Endothelial cell of umbilical vein (primary cell): ENCODE measurements at regions of chr1 and their contacts with region 1.

Region 1: GRCh38 chr1:109099938-109100773 is 9.6 kb downstream of the TMEM167B start:
- DNase-seq: peak; percentile 95
- H3K4me3 ChIP-seq: peak overlapping the region; percentile 62 to 97 (median 90)
- H3K27ac ChIP-seq: peak overlapping the region; percentile 76
- H3K4me1 ChIP-seq: no peaks in the 10 kb centered on the region
- H3K27me3 ChIP-seq: no peaks in the 10 kb centered on the region
- CTCF ChIP-seq: peak; percentile 90 to 94
- POLR2A ChIP-seq: peak; percentile 99

Region 2: GRCh38 chr1:109075531-109076490 is 24.3 kb before region 1 on chr1 and contains the start of gene TAF13:
- CTCF ChIA-PET with region 1: interaction called, 26 read pairs
- POLR2A ChIA-PET with region 1: interaction called, 11 read pairs
- dilution Hi-C with region 1: no loop called
- intact Hi-C with region 1: loop called (anchors 1 kb)
- DNase-seq: peak; percentile 96
- H3K4me3 ChIP-seq: peak within 1 kb of the TSS; percentile 53 to 90 (median 67)
- H3K27ac ChIP-seq: peak within 1 kb of the TSS; percentile 93
- H3K4me1 ChIP-seq: peaks cover 21% of the 10 kb centered on the region
- H3K27me3 ChIP-seq: no peaks in the 10 kb centered on the region
- CTCF ChIP-seq: peak in 1 of 2 donors; percentile 4
- POLR2A ChIP-seq: peak; percentile 97
- total RNA-seq, gene TAF13: 42.3 and 54.9 TPM in 2 replicates

Region 3: GRCh38 chr1:109083923-109084322 is 16.2 kb before region 1 on chr1:
- CTCF ChIA-PET with region 1: interaction called, 14 read pairs
- POLR2A ChIA-PET with region 1: interaction called, 3 read pairs
- dilution Hi-C with region 1: no loop called
- intact Hi-C with region 1: no loop called
- DNase-seq: no peak
- H3K4me3 ChIP-seq: no peak overlapping the region
- H3K27ac ChIP-seq: no peak overlapping the region
- H3K4me1 ChIP-seq: peaks cover 9% of the 10 kb centered on the region
- H3K27me3 ChIP-seq: no peaks in the 10 kb centered on the region
- CTCF ChIP-seq: no peak
- POLR2A ChIP-seq: no peak

Region 4: DNA sequence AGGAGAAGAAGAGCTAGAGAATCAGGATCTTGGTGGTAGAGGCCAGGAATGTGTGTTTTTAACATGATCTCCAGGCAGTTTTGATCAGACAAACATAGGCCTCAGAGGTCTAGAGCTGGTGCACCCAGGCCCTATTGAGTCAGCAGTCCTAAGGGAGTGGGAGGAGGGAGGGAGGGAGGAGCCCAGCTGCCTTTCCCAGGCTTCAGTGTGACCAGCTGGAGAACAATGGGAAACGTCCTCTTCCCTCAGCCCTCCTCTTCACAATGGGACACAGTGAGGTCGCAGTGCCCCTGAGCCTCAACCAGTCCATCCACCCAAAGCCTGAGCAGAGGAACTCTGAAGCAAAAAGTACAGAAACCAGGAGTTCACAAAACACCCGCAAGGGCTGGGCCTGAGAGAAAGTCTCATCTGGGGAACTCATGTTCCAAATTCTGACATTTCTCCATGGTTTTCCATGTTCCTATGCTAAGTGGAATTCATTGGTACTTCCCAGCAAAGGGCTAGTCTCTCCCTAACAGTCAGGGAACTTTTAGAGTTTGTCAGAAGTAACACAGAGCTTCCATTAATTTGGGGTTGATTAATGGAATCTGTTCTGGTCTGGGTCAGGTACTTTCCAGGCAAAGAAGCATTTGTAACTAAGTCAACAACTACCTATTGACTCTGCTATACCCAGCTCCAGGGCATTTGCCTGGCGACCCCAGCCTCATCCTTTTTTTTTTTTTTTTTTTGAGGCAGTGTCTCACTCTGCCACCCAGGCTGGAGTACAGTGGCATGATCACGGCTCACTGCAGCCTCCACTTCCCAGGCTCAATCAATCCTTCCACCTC is 51.2 kb after region 1 on chr1:
- CTCF ChIA-PET with region 1: no interaction called
- POLR2A ChIA-PET with region 1: no interaction called
- dilution Hi-C with region 1: no loop called
- intact Hi-C with region 1: no loop called
- DNase-seq: peak; percentile 57
- H3K4me3 ChIP-seq: no peak overlapping the region
- H3K27ac ChIP-seq: no peak overlapping the region
- H3K4me1 ChIP-seq: no peaks in the 10 kb centered on the region
- H3K27me3 ChIP-seq: peaks cover 0 to 3% of the 10 kb centered on the region in 2 experiments
- CTCF ChIP-seq: no peak
- POLR2A ChIP-seq: no peak

Region 5: GRCh38 chr1:109193653-109194590 is 93.8 kb after region 1 on chr1:
- CTCF ChIA-PET with region 1: interaction called, 12 read pairs
- POLR2A ChIA-PET with region 1: no interaction called
- dilution Hi-C with region 1: no loop called
- intact Hi-C with region 1: no loop called
- DNase-seq: peak; percentile 19
- H3K4me3 ChIP-seq: no peak overlapping the region
- H3K27ac ChIP-seq: no peak overlapping the region
- H3K4me1 ChIP-seq: peaks cover 31% of the 10 kb centered on the region
- H3K27me3 ChIP-seq: no peaks in the 10 kb centered on the region
- CTCF ChIP-seq: peak; percentile 51 to 57
- POLR2A ChIP-seq: no peak

Region 6: GRCh38 chr1:109213785-109214468 is 113.8 kb after region 1 on chr1 and contains the start of gene SARS1:
- CTCF ChIA-PET with region 1: interaction called, 11 read pairs
- POLR2A ChIA-PET with region 1: no interaction called
- dilution Hi-C with region 1: no loop called
- intact Hi-C with region 1: no loop called
- DNase-seq: peak; percentile 91
- H3K4me3 ChIP-seq: peak within 1 kb of the TSS; percentile 55 to 100 (median 94)
- H3K27ac ChIP-seq: peak within 1 kb of the TSS; percentile 76
- H3K4me1 ChIP-seq: peaks cover 20% of the 10 kb centered on the region
- H3K27me3 ChIP-seq: peaks cover 0 to 2% of the 10 kb centered on the region in 2 experiments
- CTCF ChIP-seq: no peak
- POLR2A ChIP-seq: peak; percentile 88
- total RNA-seq, gene SARS1: 176 and 178 TPM in 2 replicates